Transverse colon (tissue), 4 donors: ENCODE measurements at regions of chr5 and their contacts with region 1.

Region 1: DNA sequence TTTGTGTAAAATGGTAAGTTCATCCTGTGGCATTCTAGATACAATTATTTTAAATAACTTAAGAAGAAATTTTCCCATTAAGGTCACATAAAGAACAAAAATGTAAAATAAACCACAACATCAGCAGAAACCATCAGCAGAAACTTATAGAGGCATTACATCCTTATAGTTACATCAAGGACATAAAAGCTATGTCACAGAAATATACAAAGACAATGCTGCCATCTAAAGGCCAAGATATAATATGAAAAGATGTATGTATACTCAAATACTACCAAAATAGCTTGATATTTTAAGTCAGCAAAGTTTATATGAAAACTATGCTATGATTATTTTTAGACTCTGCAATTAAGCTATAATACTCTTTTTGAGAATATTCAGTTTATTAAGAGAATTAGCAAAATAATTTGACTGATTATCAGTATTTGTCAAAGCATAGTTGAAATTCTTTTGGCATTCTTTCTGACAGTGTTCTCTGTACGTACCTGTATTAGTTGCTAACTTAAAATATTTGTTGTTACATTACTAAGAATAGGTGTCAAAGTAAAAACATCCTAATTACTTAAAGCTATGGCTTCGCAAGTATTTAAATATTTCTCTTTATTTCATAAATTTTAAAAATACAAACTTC is 36.2 kb downstream of the FBXL17 start:
- DNase-seq: no peak
- H3K4me3 ChIP-seq: no peak overlapping the region
- H3K27ac ChIP-seq: peak overlapping the region in 3 of 4 donors; percentile 19 to 56 (median 36)
- H3K4me1 ChIP-seq: peaks cover 0 to 27% (median 12%) of the 10 kb centered on the region in 4 donors
- H3K27me3 ChIP-seq: no peaks in the 10 kb centered on the region
- CTCF ChIP-seq: peak in 4 of 5 experiments; percentile 33 to 50 (median 42)
- EP300 ChIP-seq: no peak
- POLR2A ChIP-seq: no peak

Region 2: GRCh38 chr5:108260117-108260857 is 85.4 kb before region 1 on chr5:
- in situ Hi-C with region 1: loop called in 2 of 4 experiments (anchors 5 to 10 kb)
- intact Hi-C with region 1: loop called (anchors 10 kb)
- DNase-seq: peak; percentile 79
- H3K4me3 ChIP-seq: peak overlapping the region in 1 of 4 donors; percentile 9
- H3K27ac ChIP-seq: no peak overlapping the region
- H3K4me1 ChIP-seq: peaks cover 0 to 27% (median 12%) of the 10 kb centered on the region in 4 donors
- H3K27me3 ChIP-seq: no peaks in the 10 kb centered on the region
- CTCF ChIP-seq: peak; percentile 79 to 93 (median 92)
- EP300 ChIP-seq: no peak
- POLR2A ChIP-seq: no peak

Region 3: DNA sequence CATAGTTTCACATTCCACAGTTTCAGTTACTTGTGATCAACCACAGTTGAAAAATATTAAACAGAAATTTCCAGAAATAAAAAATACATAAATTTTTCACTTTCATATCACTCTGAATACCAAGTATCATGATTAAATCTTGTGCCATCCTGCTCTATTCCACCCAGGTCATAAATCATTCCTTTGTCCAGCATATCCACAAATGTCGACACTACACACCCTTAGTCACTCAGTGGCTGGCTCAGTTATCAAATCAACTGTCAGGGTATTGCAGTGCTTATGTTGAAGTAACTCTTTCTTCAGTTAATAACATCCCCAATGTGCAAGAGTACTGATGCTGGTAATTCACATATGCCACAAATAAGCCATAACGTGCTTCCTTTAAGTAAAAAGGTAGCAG is 79.4 kb before region 1 on chr5:
- in situ Hi-C with region 1: loop called in 2 of 4 experiments (anchors 5 to 10 kb)
- intact Hi-C with region 1: loop called (anchors 10 kb)
- DNase-seq: no peak
- H3K4me3 ChIP-seq: no peak overlapping the region
- H3K27ac ChIP-seq: no peak overlapping the region
- H3K4me1 ChIP-seq: peaks cover 0 to 7% (median 0%) of the 10 kb centered on the region in 4 donors
- H3K27me3 ChIP-seq: no peaks in the 10 kb centered on the region
- CTCF ChIP-seq: no peak
- EP300 ChIP-seq: no peak
- POLR2A ChIP-seq: no peak